Panc1 (cell line): ENCODE measurements at regions of chr4 and their contacts with region 1.

Region 1: GRCh38 chr4:105352826-105353225 is 121.0 kb downstream of the PPA2 start:
- DNase-seq: no peak
- ATAC-seq: no peak
- H3K4me3 ChIP-seq: no peak overlapping the region
- H3K27ac ChIP-seq: no peak overlapping the region
- H3K4me1 ChIP-seq: no peaks in the 10 kb centered on the region
- H3K27me3 ChIP-seq: no peaks in the 10 kb centered on the region
- CTCF ChIP-seq: no peak

Region 2: DNA sequence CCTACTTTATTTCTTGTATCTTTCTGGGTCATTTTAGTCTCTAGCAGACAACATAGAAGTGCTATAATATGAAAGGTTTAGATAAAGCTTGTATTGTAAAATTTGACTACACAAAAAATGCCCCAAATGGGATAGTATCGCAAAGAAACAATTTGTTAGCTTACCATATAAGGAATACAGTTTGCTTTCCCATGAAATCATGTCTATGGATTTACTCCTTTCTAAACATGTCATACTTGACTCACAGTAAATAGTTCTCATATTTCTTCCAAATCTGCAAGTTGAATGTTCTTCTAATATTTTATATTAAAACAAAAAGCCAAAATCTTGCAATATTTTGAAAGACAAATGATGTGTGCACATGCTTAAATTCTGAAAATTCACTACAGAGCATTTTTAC is 17.2 kb after region 1 on chr4:
- CTCF ChIA-PET with region 1: no interaction called
- POLR2A ChIA-PET with region 1: no interaction called
- in situ Hi-C with region 1: no loop called
- intact Hi-C with region 1: no loop called
- DNase-seq: no peak
- ATAC-seq: no peak
- H3K4me3 ChIP-seq: no peak overlapping the region
- H3K27ac ChIP-seq: no peak overlapping the region
- H3K4me1 ChIP-seq: no peaks in the 10 kb centered on the region
- H3K27me3 ChIP-seq: no peaks in the 10 kb centered on the region
- CTCF ChIP-seq: no peak

Region 3: DNA sequence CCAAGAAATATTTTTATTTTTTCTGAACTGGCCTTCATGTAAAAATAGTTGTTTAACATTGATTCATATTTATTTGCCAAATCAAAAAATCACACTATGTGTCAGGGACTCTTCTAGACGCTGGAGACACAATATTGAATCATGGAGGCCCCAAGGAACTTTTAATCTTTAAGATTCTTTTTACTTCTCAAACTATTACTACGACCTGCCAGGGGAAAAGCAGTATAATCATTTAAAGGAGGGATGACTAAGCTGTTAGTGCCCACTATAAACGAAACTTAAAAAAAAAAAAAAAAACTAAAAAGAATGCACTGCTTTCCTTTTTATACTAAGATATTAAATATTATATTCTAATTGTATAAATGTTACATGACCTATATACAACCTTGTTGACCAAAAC is 36.3 kb after region 1 on chr4:
- CTCF ChIA-PET with region 1: no interaction called
- POLR2A ChIA-PET with region 1: interaction called, 10 read pairs
- in situ Hi-C with region 1: no loop called
- intact Hi-C with region 1: no loop called
- DNase-seq: no peak
- ATAC-seq: no peak
- H3K4me3 ChIP-seq: no peak overlapping the region
- H3K27ac ChIP-seq: no peak overlapping the region
- H3K4me1 ChIP-seq: no peaks in the 10 kb centered on the region
- H3K27me3 ChIP-seq: no peaks in the 10 kb centered on the region
- CTCF ChIP-seq: no peak